ENCODE measurements at regions of chr2 and their contacts with region 1.

Region 1: DNA sequence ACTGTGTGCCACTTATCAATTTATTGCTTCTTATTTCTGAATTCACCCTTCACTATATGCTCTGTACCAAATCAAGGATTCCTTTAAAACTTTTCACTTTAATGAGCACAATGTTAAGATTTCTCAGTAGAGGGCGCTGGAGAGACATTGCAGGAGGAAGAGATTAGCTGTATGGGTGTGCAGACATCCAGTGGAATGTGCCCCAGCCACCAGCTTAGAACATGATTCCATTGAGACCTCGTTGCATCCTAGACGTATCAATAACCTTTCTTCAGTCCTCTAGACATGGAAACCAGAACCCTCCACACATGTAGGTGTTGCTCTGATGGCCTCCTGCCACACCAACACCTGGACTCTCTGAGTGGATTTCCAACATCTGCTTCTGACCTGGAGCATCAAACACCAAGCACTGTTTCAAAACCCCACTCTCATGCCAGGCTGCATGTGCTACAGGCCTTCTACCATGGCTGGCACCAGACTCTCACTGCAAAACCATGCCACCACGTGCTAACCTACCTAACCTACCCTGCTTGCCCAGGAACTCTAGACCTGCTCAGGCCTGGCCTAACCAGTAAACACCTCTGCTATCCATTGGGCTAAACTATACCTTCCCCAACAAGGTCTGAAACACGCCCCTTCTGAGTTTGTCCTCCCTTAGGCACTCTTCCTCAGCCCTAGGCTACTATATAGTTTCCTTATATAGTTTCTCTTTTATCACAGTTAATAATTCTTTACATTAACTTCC is 633.2 kb upstream of the PKDCC start:
- DNase-seq: no peak
- H3K4me3 ChIP-seq: no peak overlapping the region
- H3K27ac ChIP-seq: no peak overlapping the region
- H3K4me1 ChIP-seq: no peaks in the 10 kb centered on the region
- H3K27me3 ChIP-seq: no peaks in the 10 kb centered on the region
- CTCF ChIP-seq: peak in 1 of 5 experiments; percentile 8
- EP300 ChIP-seq: no peak
- POLR2A ChIP-seq: no peak

Region 2: GRCh38 chr2:41364842-41365241 is 49.8 kb before region 1 on chr2:
- in situ Hi-C with region 1: no loop called
- intact Hi-C with region 1: no loop called
- DNase-seq: no peak
- H3K4me3 ChIP-seq: no peak overlapping the region
- H3K27ac ChIP-seq: no peak overlapping the region
- H3K4me1 ChIP-seq: no peaks in the 10 kb centered on the region
- H3K27me3 ChIP-seq: no peaks in the 10 kb centered on the region
- CTCF ChIP-seq: no peak
- EP300 ChIP-seq: no peak
- POLR2A ChIP-seq: no peak

Region 3: GRCh38 chr2:41782306-41783158 is 367.9 kb after region 1 on chr2:
- in situ Hi-C with region 1: loop called in 1 of 4 experiments (anchors 25 kb)
- intact Hi-C with region 1: no loop called
- DNase-seq: peak; percentile 10
- H3K4me3 ChIP-seq: no peak overlapping the region
- H3K27ac ChIP-seq: no peak overlapping the region
- H3K4me1 ChIP-seq: no peaks in the 10 kb centered on the region
- H3K27me3 ChIP-seq: no peaks in the 10 kb centered on the region
- CTCF ChIP-seq: peak; percentile 72 to 82 (median 79)
- EP300 ChIP-seq: no peak
- POLR2A ChIP-seq: no peak

Measured in transverse colon (tissue), 4 donors.